ENCODE measurements at regions of chr6 and their contacts with region 1.

Region 1: GRCh38 chr6:43436577-43437282 is 9.4 kb downstream of the ABCC10 start:
- DNase-seq: peak; percentile 89
- H3K4me3 Mint-ChIP-seq: peak overlapping the region; percentile 25
- H3K27ac Mint-ChIP-seq: peak overlapping the region; percentile 81
- H3K4me1 Mint-ChIP-seq: peaks cover 34% of the 10 kb centered on the region
- H3K27me3 Mint-ChIP-seq: no peaks in the 10 kb centered on the region
- CTCF ChIP-seq: no peak

Region 2: GRCh38 chr6:43477235-43478007 is 40.7 kb after region 1 on chr6 and contains the start of gene TJAP1:
- CTCF ChIA-PET with region 1: no interaction called
- intact Hi-C with region 1: no loop called
- DNase-seq: peak; percentile 100
- H3K4me3 Mint-ChIP-seq: peak within 1 kb of the TSS; percentile 90
- H3K27ac Mint-ChIP-seq: peak within 1 kb of the TSS; percentile 82
- H3K4me1 Mint-ChIP-seq: peaks cover 47% of the 10 kb centered on the region
- H3K27me3 Mint-ChIP-seq: no peaks in the 10 kb centered on the region
- CTCF ChIP-seq: no peak
- total RNA-seq, gene TJAP1: 70.7 and 72.3 TPM in 2 replicates

Region 3: DNA sequence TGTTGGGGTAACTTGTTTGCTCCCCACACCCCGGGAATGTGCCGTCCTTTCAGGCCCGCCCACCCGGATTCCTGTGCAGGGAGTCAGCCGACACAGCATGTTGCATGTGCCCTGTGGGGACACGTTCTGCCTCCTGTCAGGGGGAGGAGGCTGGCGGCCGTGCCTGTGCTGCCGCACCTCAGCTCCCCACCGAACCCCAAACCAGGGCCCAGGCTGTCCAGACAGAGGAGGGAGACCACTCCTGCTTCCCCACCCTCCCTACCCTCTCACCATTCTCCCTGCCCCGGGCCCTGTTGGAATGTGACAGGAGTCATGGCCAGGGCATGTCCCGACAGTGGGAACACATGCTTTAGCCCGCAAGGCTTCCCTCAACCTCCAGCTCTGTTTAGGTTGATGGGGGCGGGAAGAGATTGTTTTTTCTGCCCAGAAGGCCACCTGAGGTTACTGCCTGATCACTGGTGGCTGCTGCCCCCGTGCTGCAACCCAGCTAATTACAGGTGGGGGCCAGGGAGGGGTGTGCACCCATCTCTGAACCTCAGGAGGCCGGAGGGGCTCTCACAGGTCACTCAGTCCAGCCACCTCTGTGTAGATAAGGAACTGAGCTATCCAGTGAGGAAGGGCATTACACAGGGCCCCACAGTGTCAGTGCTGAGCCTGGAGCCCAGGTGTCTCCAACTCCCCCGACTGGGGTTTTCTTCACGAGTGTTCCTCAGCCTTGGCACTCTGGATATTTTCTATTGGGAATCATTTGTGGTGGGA is 59.8 kb after region 1 on chr6:
- CTCF ChIA-PET with region 1: no interaction called
- intact Hi-C with region 1: loop called (anchors 2 kb)
- DNase-seq: peak; percentile 75
- H3K4me3 Mint-ChIP-seq: no peak overlapping the region
- H3K27ac Mint-ChIP-seq: no peak overlapping the region
- H3K4me1 Mint-ChIP-seq: peaks cover 42% of the 10 kb centered on the region
- H3K27me3 Mint-ChIP-seq: no peaks in the 10 kb centered on the region
- CTCF ChIP-seq: peak; percentile 89